Naive thymus-derived CD4-positive, alpha-beta T cell (primary cell): ENCODE measurements at regions of chr11 and their contacts with region 1.

Region 1: GRCh38 chr11:59142530-59143507 is at the start of gene FAM111A:
- DNase-seq: peak; percentile 68 to 91 (median 89)
- ATAC-seq: peak; percentile 91
- H3K4me3 ChIP-seq: peak within 1 kb of the TSS; percentile 97
- H3K4me3 Mint-ChIP-seq: peak within 1 kb of the TSS; percentile 95 to 100 (median 98)
- H3K27ac ChIP-seq: peak within 1 kb of the TSS; percentile 81
- H3K27ac Mint-ChIP-seq: peak within 1 kb of the TSS; percentile 93 to 99 (median 97)
- H3K4me1 ChIP-seq: peaks cover 19 to 24% of the 10 kb centered on the region in 2 donors
- H3K4me1 Mint-ChIP-seq: peaks cover 42 to 70% (median 53%) of the 10 kb centered on the region in 7 donors
- H3K27me3 ChIP-seq: no peaks in the 10 kb centered on the region
- H3K27me3 Mint-ChIP-seq: no peaks in the 10 kb centered on the region
- total RNA-seq, gene FAM111A: 73.1 to 138 (median 117) TPM

Region 2: DNA sequence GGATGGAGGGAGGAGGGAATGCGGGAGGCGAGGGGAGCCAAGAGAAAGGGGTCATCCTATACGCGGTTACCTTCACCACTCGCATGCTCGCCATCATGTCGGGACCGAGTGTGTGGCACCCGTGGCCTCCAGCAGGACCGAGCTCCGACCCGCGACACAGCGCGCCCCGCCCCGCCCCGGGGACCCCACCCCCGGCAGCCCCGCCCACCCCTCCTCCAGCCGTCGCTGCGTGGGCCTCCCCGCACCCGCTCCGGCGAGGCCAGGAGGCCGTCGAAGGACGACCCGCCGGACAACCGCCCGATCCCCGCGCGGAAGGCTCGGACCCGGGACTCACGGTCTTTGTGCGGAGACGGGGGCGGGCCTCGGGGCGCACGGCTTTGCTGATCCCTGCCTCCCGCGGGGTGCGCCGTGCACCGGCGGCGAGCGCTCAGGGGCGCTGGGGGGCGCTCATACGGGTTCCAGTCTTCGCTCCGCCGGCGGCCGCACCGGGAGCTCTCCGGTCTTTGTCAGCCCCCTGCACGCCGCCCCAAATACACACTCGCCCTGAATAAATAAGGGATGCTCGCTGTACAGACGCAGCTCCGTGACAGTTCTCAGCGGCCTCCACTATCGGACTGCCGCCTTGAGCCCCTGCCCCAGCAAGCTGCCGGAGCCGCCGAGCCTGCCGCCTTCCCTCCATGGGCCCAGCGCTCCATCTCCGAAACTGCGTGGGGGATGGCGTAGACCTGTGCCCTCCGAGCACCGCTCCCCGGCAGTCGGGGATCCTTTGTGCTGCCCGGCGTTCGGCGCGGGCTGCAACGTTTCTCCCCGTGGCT is 1575.1 kb before region 1 on chr11 and contains the start of gene UBE2L6:
- CTCF ChIA-PET with region 1: no interaction called
- POLR2A ChIA-PET with region 1: no interaction called
- intact Hi-C with region 1: loop called in 1 of 2 experiments (anchors 10 kb)
- DNase-seq: peak; percentile 51 to 74 (median 67)
- ATAC-seq: peak; percentile 90
- H3K4me3 ChIP-seq: peak within 1 kb of the TSS; percentile 99
- H3K4me3 Mint-ChIP-seq: peak within 1 kb of the TSS; percentile 92 to 100 (median 99)
- H3K27ac ChIP-seq: peak within 1 kb of the TSS; percentile 97
- H3K27ac Mint-ChIP-seq: peak within 1 kb of the TSS; percentile 95 to 100 (median 98)
- H3K4me1 ChIP-seq: peaks cover 9 to 17% of the 10 kb centered on the region in 2 donors
- H3K4me1 Mint-ChIP-seq: peaks cover 37 to 65% (median 50%) of the 10 kb centered on the region in 7 donors
- H3K27me3 ChIP-seq: no peaks in the 10 kb centered on the region
- H3K27me3 Mint-ChIP-seq: no peaks in the 10 kb centered on the region
- total RNA-seq, gene UBE2L6: 51.1 to 326 (median 64.2) TPM

Region 3: DNA sequence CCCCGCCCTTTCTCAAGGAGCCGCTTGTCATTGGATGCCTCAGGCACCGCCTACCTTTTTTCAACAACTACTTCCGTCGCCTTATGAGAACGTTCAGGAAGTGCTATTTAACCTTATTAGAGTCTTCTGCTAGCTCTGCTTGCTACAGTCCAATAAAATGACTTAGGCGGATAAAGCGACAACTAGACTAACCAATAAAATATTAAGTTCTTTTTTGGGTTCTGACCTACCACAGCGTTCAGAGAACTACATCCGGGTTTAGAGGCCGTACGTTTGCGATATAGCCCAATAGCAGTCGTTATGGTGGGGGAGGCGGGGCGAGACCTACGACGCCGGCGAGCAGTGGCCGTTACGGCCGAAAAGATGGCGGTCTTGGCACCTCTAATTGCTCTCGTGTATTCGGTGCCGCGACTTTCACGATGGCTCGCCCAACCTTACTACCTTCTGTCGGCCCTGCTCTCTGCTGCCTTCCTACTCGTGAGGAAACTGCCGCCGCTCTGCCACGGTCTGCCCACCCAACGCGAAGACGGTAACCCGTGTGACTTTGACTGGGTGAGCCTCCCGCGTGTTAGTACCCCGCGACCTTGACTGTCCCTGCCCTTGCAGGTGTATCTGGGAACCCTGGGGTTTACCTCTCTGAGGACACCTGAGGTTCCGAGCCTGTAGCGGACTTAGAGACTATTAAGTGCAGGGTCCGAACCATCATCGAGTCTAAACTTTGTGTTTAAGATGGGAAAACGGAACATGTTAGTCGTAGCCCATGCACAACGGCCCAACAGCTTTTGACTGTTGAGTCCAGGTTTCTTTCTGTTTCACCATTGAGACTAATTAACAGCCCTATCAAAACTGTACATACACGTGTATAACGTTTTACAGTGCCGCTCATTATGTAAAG is 1430.3 kb before region 1 on chr11 and contains the start of gene TMX2:
- CTCF ChIA-PET with region 1: no interaction called
- POLR2A ChIA-PET with region 1: no interaction called
- intact Hi-C with region 1: loop called in 1 of 2 experiments (anchors 1 kb)
- DNase-seq: peak; percentile 73 to 96 (median 91)
- ATAC-seq: peak; percentile 94
- H3K4me3 ChIP-seq: peak within 1 kb of the TSS; percentile 98
- H3K4me3 Mint-ChIP-seq: peak within 1 kb of the TSS; percentile 86 to 99 (median 98)
- H3K27ac ChIP-seq: peak within 1 kb of the TSS; percentile 95
- H3K27ac Mint-ChIP-seq: peak within 1 kb of the TSS; percentile 87 to 99 (median 95)
- H3K4me1 ChIP-seq: peaks cover 25 to 33% of the 10 kb centered on the region in 2 donors
- H3K4me1 Mint-ChIP-seq: peaks cover 14 to 61% (median 52%) of the 10 kb centered on the region in 7 donors
- H3K27me3 ChIP-seq: no peaks in the 10 kb centered on the region
- H3K27me3 Mint-ChIP-seq: no peaks in the 10 kb centered on the region
- total RNA-seq, gene TMX2: 43.0 to 67.3 (median 64.8) TPM

Region 4: GRCh38 chr11:59053387-59053786 is 89.4 kb before region 1 on chr11:
- CTCF ChIA-PET with region 1: interaction called, 5 read pairs
- POLR2A ChIA-PET with region 1: no interaction called
- intact Hi-C with region 1: loop called in 1 of 2 experiments (anchors 1 kb)
- DNase-seq: peak; percentile 44 to 84 (median 69)
- ATAC-seq: peak; percentile 82
- H3K4me3 ChIP-seq: no peak overlapping the region
- H3K4me3 Mint-ChIP-seq: no peak overlapping the region
- H3K27ac ChIP-seq: no peak overlapping the region
- H3K27ac Mint-ChIP-seq: no peak overlapping the region
- H3K4me1 ChIP-seq: no peaks in the 10 kb centered on the region
- H3K4me1 Mint-ChIP-seq: peaks cover 5 to 7% (median 6%) of the 10 kb centered on the region in 7 donors
- H3K27me3 ChIP-seq: no peaks in the 10 kb centered on the region
- H3K27me3 Mint-ChIP-seq: peaks cover 2 to 30% (median 11%) of the 10 kb centered on the region in 5 donors

Region 5: GRCh38 chr11:59171508-59172322 is 28.9 kb after region 1 on chr11 and contains the start of gene DTX4:
- CTCF ChIA-PET with region 1: interaction called, 7 read pairs
- POLR2A ChIA-PET with region 1: interaction called, 3 read pairs
- intact Hi-C with region 1: loop called (anchors 1 kb)
- DNase-seq: peak; percentile 69 to 87 (median 84)
- ATAC-seq: peak; percentile 94
- H3K4me3 ChIP-seq: peak within 1 kb of the TSS; percentile 85
- H3K4me3 Mint-ChIP-seq: peak within 1 kb of the TSS; percentile 81 to 92 (median 89)
- H3K27ac ChIP-seq: peak within 1 kb of the TSS; percentile 10
- H3K27ac Mint-ChIP-seq: peak within 1 kb of the TSS in 5 of 9 donors; percentile 13 to 75 (median 65)
- H3K4me1 ChIP-seq: peaks cover 4 to 7% of the 10 kb centered on the region in 2 donors
- H3K4me1 Mint-ChIP-seq: peaks cover 0 to 16% (median 10%) of the 10 kb centered on the region in 7 donors
- H3K27me3 ChIP-seq: no peaks in the 10 kb centered on the region
- H3K27me3 Mint-ChIP-seq: peaks cover 0 to 43% (median 7%) of the 10 kb centered on the region in 5 donors
- total RNA-seq, gene DTX4: 0.22 to 3.9 (median 2.2) TPM

Region 6: DNA sequence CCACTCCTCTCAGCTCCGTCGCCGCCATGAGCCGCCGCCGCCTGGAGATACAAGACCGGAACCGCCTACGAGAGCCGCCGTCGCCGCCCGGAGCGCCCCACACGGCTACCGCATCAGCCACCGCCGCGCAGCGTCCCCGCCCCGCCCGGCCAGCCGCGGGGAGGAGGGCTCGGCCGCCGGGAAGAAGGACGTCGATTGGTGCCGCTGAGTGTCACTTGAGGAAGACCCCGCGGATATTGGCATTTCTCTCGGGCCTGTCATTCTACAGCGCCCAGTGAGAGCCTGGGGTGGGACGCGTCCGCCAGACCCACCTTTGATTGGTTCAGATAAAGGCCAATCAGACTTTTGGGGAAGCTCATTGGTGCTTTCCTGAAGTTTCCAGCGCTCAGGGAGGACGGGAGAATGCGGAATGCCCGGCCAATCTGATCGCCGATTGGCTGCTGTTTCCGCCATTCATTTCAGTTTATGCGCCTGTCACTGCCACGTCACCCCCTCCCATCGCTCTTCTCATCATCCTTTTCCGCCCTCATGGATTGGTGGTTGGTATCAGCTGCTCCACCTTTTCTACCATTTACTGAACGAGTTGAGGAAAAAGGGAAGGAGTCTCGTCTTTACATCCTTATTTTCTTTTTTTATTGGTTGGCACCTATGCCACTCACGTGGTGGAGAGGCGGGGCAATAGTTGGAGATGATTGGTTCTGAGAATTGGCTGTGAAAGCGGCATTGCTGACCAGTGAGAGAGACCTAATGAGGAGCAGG is 473.0 kb after region 1 on chr11 and contains the start of gene OSBP:
- CTCF ChIA-PET with region 1: no interaction called
- POLR2A ChIA-PET with region 1: interaction called, 3 read pairs
- intact Hi-C with region 1: loop called (anchors 1 kb)
- DNase-seq: peak; percentile 86 to 100 (median 99)
- ATAC-seq: peak; percentile 84
- H3K4me3 ChIP-seq: peak within 1 kb of the TSS; percentile 72
- H3K4me3 Mint-ChIP-seq: peak within 1 kb of the TSS; percentile 82 to 99 (median 94)
- H3K27ac ChIP-seq: peak within 1 kb of the TSS; percentile 93
- H3K27ac Mint-ChIP-seq: peak within 1 kb of the TSS; percentile 84 to 98 (median 94)
- H3K4me1 ChIP-seq: peaks cover 26 to 29% of the 10 kb centered on the region in 2 donors
- H3K4me1 Mint-ChIP-seq: peaks cover 35 to 54% (median 41%) of the 10 kb centered on the region in 7 donors
- H3K27me3 ChIP-seq: no peaks in the 10 kb centered on the region
- H3K27me3 Mint-ChIP-seq: no peaks in the 10 kb centered on the region
- total RNA-seq, gene OSBP: 39.8 to 57.6 (median 52.4) TPM

Region 7: GRCh38 chr11:59810189-59810910 is 667.5 kb after region 1 on chr11 and contains the start of gene MRPL16:
- CTCF ChIA-PET with region 1: no interaction called
- POLR2A ChIA-PET with region 1: no interaction called
- intact Hi-C with region 1: loop called in 1 of 2 experiments (anchors 10 kb)
- DNase-seq: peak; percentile 74 to 89 (median 83)
- ATAC-seq: peak; percentile 100
- H3K4me3 ChIP-seq: peak within 1 kb of the TSS; percentile 83
- H3K4me3 Mint-ChIP-seq: peak within 1 kb of the TSS; percentile 88 to 95 (median 92)
- H3K27ac ChIP-seq: peak within 1 kb of the TSS; percentile 75
- H3K27ac Mint-ChIP-seq: peak within 1 kb of the TSS; percentile 86 to 94 (median 92)
- H3K4me1 ChIP-seq: peaks cover 4 to 9% of the 10 kb centered on the region in 2 donors
- H3K4me1 Mint-ChIP-seq: peaks cover 6 to 35% (median 29%) of the 10 kb centered on the region in 7 donors
- H3K27me3 ChIP-seq: no peaks in the 10 kb centered on the region
- H3K27me3 Mint-ChIP-seq: peaks cover 0 to 7% (median 0%) of the 10 kb centered on the region in 5 donors
- total RNA-seq, gene MRPL16: 25.1 to 65.6 (median 35.2) TPM